ENCODE measurements at regions of chr6 and their contacts with region 1.

Region 1: GRCh38 chr6:142692942-142693341 is 252.0 kb downstream of the HIVEP2 start:
- DNase-seq: peak; percentile 42
- ATAC-seq: peak; percentile 89
- H3K4me3 Mint-ChIP-seq: no peak overlapping the region
- H3K27ac Mint-ChIP-seq: no peak overlapping the region
- H3K4me1 Mint-ChIP-seq: peaks cover 6% of the 10 kb centered on the region
- H3K27me3 Mint-ChIP-seq: no peaks in the 10 kb centered on the region
- CTCF ChIP-seq: peak; percentile 18

Region 2: DNA sequence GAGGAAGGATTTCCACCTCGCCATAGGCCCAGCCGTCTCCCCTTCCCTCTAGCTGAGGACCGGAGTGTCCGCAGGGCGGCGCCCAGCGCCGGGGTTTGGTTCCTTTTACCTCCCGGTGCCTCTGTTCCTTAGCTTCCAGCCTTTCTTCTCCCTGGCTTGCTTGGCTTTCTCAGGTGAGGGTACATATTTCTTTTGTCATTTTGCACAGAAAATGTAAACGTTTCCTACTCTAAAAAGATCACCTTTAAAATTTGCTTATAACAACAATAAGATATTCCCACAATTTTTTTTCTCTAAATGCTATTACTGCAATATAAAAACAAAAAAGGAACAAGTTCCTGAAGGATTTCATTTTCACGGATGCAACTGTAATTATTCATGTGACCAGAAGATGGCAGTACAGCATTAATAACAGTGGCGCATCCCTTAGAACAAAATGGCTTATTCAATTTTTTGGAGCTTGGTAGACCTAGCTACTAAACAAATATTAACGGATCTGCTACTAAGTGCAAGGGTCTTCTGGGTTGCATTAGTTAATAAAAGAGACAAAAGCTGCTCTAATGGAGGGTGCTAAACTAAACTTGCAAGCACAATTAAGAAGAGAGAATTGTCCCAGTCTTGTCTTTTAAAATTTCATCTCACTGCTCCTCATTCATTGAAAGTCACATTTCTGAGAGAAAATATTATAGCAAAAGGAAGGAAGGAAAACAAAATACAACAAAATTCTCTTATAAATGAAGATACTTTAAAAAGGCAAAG is 218.2 kb before region 1 on chr6:
- CTCF ChIA-PET with region 1: interaction called, 3 read pairs
- POLR2A ChIA-PET with region 1: no interaction called
- intact Hi-C with region 1: loop called (anchors 2 kb)
- DNase-seq: no peak
- ATAC-seq: peak; percentile 54
- H3K4me3 Mint-ChIP-seq: no peak overlapping the region
- H3K27ac Mint-ChIP-seq: no peak overlapping the region
- H3K4me1 Mint-ChIP-seq: no peaks in the 10 kb centered on the region
- H3K27me3 Mint-ChIP-seq: peaks cover 3% of the 10 kb centered on the region
- CTCF ChIP-seq: peak; percentile 81

Region 3: GRCh38 chr6:142746524-142746923 is 53.6 kb after region 1 on chr6:
- CTCF ChIA-PET with region 1: interaction called, 3 read pairs
- POLR2A ChIA-PET with region 1: no interaction called
- intact Hi-C with region 1: loop called (anchors 1 kb)
- DNase-seq: no peak
- ATAC-seq: peak; percentile 58
- H3K4me3 Mint-ChIP-seq: no peak overlapping the region
- H3K27ac Mint-ChIP-seq: no peak overlapping the region
- H3K4me1 Mint-ChIP-seq: peaks cover 11% of the 10 kb centered on the region
- H3K27me3 Mint-ChIP-seq: peaks cover 3% of the 10 kb centered on the region
- CTCF ChIP-seq: no peak

Region 4: DNA sequence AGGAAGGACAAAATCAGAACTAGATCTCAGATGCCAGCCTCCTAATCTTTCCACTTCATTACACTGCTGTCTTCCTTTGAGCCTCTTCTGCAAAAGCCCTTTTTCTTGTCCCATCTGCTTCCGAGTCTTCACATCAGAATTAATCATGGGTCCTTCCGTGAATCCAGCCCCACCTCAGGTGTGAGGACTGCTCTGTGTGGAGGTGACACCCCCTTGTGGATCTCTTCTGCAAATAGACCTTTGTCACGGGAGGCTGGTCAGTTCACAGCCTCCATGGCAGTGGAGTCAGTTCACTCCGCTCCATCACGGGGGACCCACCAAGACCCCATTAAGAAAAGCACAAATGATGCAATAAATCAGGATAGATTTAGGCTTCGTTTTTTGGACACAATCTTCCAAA is 586.4 kb after region 1 on chr6:
- CTCF ChIA-PET with region 1: interaction called, 12 read pairs
- POLR2A ChIA-PET with region 1: no interaction called
- intact Hi-C with region 1: loop called (anchors 1 kb)
- DNase-seq: no peak
- ATAC-seq: no peak
- H3K4me3 Mint-ChIP-seq: no peak overlapping the region
- H3K27ac Mint-ChIP-seq: no peak overlapping the region
- H3K4me1 Mint-ChIP-seq: peaks cover 7% of the 10 kb centered on the region
- H3K27me3 Mint-ChIP-seq: no peaks in the 10 kb centered on the region
- CTCF ChIP-seq: no peak

Region 5: DNA sequence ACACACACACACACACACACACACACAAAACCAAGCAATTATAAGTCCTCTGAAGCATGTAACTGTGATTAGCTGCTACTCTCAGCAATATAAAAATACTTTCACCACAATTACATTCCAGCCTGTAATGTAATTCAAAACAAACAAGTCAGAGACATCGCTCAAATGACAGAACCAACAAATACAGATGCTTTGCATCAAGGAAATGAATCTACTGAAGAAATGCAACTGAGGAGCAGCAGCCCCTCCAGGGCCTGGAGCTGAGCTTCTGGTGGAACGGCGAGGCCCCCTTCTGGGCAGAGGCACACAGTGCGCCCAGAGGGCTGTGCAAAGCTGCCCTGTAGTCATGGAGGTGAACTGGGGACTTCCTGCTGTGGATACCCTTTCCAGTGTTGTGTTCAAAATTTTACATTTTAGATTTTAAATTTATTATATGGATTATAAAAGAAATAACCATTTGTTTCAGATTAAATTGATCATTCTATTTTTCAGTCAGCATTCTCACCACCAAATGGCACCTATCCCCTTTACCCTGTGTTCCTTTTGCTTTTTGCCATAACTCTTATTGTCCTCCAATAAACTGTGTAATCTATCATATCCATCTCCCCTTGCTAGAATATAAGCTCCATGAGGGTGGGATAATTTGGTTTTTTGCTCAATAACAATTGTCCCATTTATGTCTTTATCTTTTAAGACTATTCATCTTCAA is 734.3 kb after region 1 on chr6:
- CTCF ChIA-PET with region 1: interaction called, 64 read pairs
- POLR2A ChIA-PET with region 1: interaction called, 7 read pairs
- intact Hi-C with region 1: loop called (anchors 1 kb)
- DNase-seq: peak; percentile 44
- ATAC-seq: peak; percentile 100
- H3K4me3 Mint-ChIP-seq: no peak overlapping the region
- H3K27ac Mint-ChIP-seq: no peak overlapping the region
- H3K4me1 Mint-ChIP-seq: no peaks in the 10 kb centered on the region
- H3K27me3 Mint-ChIP-seq: no peaks in the 10 kb centered on the region
- CTCF ChIP-seq: peak; percentile 58

Region 6: DNA sequence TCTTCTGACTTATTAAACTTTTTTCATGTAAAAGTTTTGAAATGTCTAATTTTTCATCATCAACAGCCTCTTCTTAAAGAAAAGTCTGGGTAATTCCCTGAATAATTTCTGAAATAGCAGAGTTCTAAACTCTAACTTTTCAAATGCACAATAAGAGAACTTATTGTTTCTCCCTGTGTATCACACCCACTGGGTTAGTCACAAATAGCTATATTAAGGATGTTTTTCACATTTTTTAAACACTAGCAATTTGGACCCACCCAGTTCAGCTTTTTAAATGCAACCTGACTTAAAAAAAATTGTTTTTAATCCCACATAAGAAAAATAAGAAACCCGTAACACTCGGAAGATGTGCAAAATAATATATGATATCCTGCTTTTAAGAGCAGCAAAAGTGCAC is 1530.7 kb after region 1 on chr6:
- CTCF ChIA-PET with region 1: no interaction called
- POLR2A ChIA-PET with region 1: no interaction called
- intact Hi-C with region 1: no loop called
- DNase-seq: no peak
- ATAC-seq: no peak
- H3K4me3 Mint-ChIP-seq: no peak overlapping the region
- H3K27ac Mint-ChIP-seq: no peak overlapping the region
- H3K4me1 Mint-ChIP-seq: peaks cover 8% of the 10 kb centered on the region
- H3K27me3 Mint-ChIP-seq: peaks cover 2% of the 10 kb centered on the region
- CTCF ChIP-seq: no peak